ENCODE measurements at regions of chr1 and their contacts with region 1.

Region 1: GRCh38 chr1:151024540-151025146 is 11.7 kb upstream of the BNIPL start:
- DNase-seq: peak; percentile 91

Region 2: GRCh38 chr1:150995896-150996295 is 28.7 kb before region 1 on chr1:
- intact Hi-C with region 1: loop called in 1 of 2 experiments (anchors 2 kb)
- DNase-seq: peak; percentile 85

Region 3: DNA sequence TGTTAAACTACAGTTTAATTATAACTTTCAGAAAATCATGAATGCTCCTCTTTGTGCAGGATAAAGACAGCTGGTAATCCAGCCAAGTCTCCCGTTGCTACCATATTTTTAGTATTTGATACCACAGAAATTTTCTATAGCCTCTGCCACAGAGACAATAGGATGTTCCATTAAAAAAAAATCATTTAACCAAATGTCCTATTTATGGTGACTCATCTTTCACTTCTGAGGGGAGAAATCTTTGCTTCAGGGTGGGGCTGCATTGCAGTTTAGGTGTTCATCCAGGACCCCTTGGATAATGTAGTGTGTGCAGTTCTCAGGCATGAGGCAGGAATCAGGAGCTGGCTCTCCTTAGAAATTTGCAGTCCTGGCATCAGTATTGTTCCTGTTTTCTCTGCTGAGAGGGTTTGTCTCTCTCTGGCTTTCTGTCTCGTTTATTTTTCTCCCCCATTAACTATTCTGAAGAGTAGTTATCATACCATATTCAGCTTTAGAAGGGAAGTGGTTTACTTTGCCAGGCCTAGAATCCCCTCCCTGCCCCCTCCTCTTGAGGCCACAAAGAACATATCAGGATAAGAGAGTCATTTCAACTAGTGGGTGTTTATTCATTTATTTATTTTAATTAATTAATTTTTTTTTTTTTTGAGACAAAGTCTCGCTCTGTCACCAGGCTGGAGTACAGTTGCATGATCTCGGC is 13.3 kb before region 1 on chr1:
- intact Hi-C with region 1: loop called in 1 of 2 experiments (anchors 2 kb)
- DNase-seq: no peak

Measured in posterior vena cava (tissue), 2 donors.